ENCODE measurements at regions of chr19 and their contacts with region 1.

Region 1: GRCh38 chr19:38831142-38831605 is 420 bp downstream of the ECH1 start:
- DNase-seq: peak; percentile 70
- ATAC-seq: peak; percentile 51 to 60

Region 2: DNA sequence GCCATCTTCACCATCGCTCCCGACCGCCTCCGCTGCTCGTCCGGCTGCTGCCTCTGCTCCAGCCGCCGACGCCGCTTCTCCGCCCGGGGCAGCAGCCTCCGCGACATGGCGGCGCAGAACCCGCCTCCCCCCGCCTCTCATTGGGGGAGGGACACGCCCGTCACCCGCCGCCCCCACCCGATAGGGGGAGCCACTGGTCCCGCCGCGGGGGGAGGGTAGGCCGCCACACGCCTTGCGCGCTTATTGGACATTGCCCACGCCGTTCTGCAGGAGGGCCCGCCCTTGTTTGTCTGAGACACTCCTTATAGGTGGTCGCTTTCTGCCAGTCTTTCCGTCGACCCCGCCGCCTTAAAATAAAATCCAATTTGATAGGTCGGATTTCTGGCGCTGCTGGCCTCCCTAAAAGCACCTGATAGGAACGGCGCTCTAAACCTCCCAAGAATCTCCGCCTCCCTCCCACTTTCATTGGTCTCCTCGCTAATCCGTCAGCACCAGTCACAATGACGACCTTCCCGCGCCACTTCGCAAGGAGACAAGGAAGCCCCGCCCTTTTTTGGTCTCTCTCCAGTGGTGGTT is 18.8 kb after region 1 on chr19 and contains the start of gene HNRNPL:
- intact Hi-C with region 1: loop called in 1 of 2 experiments (anchors 2 kb)
- DNase-seq: peak; percentile 99
- ATAC-seq: peak; percentile 76 to 82
- total RNA-seq, gene HNRNPL: 179 to 185 TPM

Region 3: GRCh38 chr19:38869856-38870607 is 38.9 kb after region 1 on chr19:
- intact Hi-C with region 1: no loop called
- DNase-seq: peak; percentile 91
- ATAC-seq: peak; percentile 94 to 97